ENCODE measurements at regions of chr19 and their contacts with region 1.

Region 1: DNA sequence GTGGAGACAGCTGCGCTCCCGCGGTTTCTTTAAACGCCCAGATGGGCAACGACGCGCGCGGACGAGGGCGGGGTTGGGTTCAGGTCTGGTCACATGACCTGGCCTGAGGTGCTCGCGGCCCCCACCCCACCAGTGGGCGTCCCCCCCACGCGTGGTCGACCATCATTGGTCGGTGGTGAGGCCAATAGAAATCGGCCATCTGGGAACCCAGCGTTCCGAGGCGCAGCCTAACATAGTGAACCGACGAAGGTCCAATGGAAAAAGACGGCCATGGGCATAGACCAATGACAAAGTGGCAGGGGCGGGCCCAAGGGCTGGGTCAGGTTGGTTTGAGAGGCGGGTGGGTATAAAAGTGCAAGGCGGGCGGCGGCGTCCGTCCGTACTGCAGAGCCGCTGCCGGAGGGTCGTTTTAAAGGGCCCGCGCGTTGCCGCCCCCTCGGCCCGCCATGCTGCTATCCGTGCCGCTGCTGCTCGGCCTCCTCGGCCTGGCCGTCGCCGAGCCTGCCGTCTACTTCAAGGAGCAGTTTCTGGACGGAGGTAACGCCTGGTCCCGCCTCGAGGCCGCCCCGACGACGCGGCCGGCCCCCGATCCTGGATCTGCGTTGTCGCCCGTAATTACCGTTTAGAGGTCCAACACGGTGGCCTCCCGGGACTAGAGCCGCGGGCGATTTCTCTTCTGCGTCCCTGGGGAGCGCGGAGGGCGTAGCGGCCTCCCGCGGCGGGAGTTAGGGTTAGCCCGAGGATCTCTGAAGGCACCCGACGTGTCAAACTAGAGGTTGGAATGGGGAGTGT is at the start of gene CALR:
- DNase-seq: peak; percentile 97
- ATAC-seq: peak; percentile 92
- H3K4me3 ChIP-seq: peak within 1 kb of the TSS; percentile 90
- H3K27ac ChIP-seq: peak within 1 kb of the TSS; percentile 89
- H3K4me1 ChIP-seq: peaks cover 49% of the 10 kb centered on the region
- H3K27me3 ChIP-seq: no peaks in the 10 kb centered on the region
- CTCF ChIP-seq: peak in 1 of 3 experiments; percentile 10; a peak in 1 of 6 replicates
- EP300 ChIP-seq: peak in 1 of 2 experiments; percentile 8; a peak in 1 of 4 replicates
- POLR2A ChIP-seq: peak; percentile 99
- RAD21 ChIP-seq: no peak
- polyA plus RNA-seq, gene CALR: 202 to 216 TPM

Region 2: DNA sequence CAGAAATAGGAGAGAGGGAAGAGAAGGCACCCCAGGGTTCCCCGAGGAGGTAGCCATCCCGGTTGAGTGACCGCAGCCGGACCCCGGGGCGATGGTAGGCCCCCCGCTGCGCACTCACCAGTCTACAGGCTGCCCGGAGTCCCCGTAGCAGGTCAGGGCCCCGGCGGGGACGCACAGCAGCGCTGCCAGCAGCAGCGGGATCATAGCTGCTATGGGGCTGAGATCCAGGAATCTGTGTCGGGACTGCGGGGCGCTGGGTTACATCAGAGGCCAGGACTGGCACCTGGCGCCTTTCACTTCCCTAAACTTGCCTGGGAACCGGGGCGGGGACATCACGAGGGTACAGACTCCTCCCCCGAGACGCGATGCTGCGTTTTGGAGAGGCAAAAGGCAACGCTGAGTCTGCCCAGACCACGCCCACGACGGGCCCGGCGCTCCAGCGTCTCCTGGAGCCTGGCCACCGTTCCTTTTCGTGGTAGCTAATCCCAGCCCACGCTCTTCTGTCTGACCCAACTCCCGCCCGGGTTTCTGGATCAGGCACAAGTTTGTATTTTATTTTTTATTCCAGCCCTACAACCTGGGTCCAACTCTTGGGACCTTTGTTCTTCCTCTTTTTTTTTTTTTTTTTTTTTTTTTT is 57.1 kb before region 1 on chr19 and contains the start of gene DNASE2:
- CTCF ChIA-PET with region 1: interaction called, 8 read pairs
- POLR2A ChIA-PET with region 1: interaction called, 13 read pairs
- RAD21 ChIA-PET with region 1: interaction called, 5 read pairs
- SMC1A ChIA-PET with region 1: interaction called, 5 read pairs
- in situ Hi-C with region 1: no loop called
- intact Hi-C with region 1: loop called (anchors 1 kb)
- DNase-seq: peak; percentile 85
- ATAC-seq: peak; percentile 88
- H3K4me3 ChIP-seq: peak within 1 kb of the TSS; percentile 90
- H3K27ac ChIP-seq: peak within 1 kb of the TSS; percentile 82
- H3K4me1 ChIP-seq: peaks cover 16% of the 10 kb centered on the region
- H3K27me3 ChIP-seq: no peaks in the 10 kb centered on the region; a peak in 1 of 4 replicates
- CTCF ChIP-seq: no peak
- EP300 ChIP-seq: peak in 1 of 2 experiments; percentile 59; a peak in 1 of 4 replicates
- POLR2A ChIP-seq: peak; percentile 88
- RAD21 ChIP-seq: no peak
- polyA plus RNA-seq, gene DNASE2: 4.9 to 7.8 TPM

Region 3: GRCh38 chr19:12899891-12900518 is 38.4 kb before region 1 on chr19:
- CTCF ChIA-PET with region 1: interaction called, 4 read pairs
- POLR2A ChIA-PET with region 1: interaction called, 11 read pairs
- RAD21 ChIA-PET with region 1: interaction called, 11 read pairs
- SMC1A ChIA-PET with region 1: interaction called, 10 read pairs
- in situ Hi-C with region 1: no loop called
- intact Hi-C with region 1: no loop called
- DNase-seq: peak; percentile 61
- ATAC-seq: peak; percentile 97
- H3K4me3 ChIP-seq: peak overlapping the region; percentile 9; the same call in 1 of the 2 replicates
- H3K27ac ChIP-seq: peak overlapping the region; percentile 4; the same call in 1 of the 2 replicates
- H3K4me1 ChIP-seq: peaks cover 15% of the 10 kb centered on the region
- H3K27me3 ChIP-seq: no peaks in the 10 kb centered on the region
- CTCF ChIP-seq: peak in 2 of 3 experiments; percentile 1 to 18; a peak in 1 of 6 replicates
- EP300 ChIP-seq: peak; percentile 76 to 89; a peak in 3 of 4 replicates
- POLR2A ChIP-seq: no peak
- RAD21 ChIP-seq: no peak

Region 4: GRCh38 chr19:12918271-12918670 is 20.2 kb before region 1 on chr19:
- CTCF ChIA-PET with region 1: no interaction called
- POLR2A ChIA-PET with region 1: interaction called, 8 read pairs
- RAD21 ChIA-PET with region 1: no interaction called
- SMC1A ChIA-PET with region 1: interaction called, 14 read pairs
- in situ Hi-C with region 1: no loop called
- intact Hi-C with region 1: no loop called
- DNase-seq: no peak
- ATAC-seq: no peak
- H3K4me3 ChIP-seq: no peak overlapping the region
- H3K27ac ChIP-seq: no peak overlapping the region
- H3K4me1 ChIP-seq: peaks cover 10% of the 10 kb centered on the region
- H3K27me3 ChIP-seq: no peaks in the 10 kb centered on the region
- CTCF ChIP-seq: no peak
- EP300 ChIP-seq: no peak
- POLR2A ChIP-seq: no peak; the same call in 1 of the 2 replicates
- RAD21 ChIP-seq: no peak

Region 5: DNA sequence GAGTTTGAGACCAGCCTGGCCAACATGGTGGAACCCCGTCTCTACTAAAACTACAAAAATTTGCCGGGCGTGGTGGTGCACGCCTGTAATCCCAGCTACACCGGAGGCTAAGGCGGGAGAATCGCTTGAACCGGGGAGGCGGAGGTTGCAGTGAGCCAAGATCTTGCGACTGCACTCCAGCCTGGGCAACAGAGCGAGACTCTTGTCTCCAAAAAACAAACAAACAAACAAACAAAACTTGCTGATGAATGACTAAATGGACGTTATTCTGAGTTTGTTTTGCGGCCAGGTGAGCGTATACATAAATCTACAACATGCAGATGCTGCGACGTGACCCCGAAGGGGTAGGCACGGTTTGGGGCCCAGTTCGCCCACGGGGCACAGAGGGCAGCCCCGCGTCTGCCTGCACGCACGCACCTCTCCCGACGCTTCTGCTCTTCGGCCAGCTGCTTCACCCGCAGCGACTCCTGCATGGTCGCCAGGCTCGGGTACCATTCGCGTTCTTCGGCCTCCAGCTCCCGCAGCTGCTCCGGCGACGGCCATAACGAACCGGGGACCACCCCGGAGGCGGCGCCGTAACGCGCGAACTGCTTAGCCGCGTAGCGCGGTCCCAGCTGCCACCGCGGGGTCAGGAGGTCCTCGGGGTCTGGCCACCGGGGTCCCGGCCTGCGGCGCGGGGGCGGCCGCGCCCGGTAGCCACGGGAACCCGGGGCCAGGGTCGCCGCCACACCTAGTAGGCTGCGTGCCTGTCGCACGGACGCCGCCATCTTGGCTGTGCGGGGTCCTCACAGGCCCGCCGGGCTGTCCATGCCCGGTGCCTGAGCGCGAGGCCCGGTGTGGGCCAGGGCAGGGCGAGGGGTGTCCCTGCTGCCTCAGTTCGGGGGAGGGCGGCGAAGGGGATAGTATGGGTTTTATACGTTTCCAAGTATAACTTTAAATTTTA is 18.3 kb after region 1 on chr19 and contains the start of gene GADD45GIP1:
- CTCF ChIA-PET with region 1: no interaction called
- POLR2A ChIA-PET with region 1: interaction called, 11 read pairs
- RAD21 ChIA-PET with region 1: no interaction called
- SMC1A ChIA-PET with region 1: interaction called, 9 read pairs
- in situ Hi-C with region 1: no loop called
- intact Hi-C with region 1: no loop called
- DNase-seq: peak; percentile 41
- ATAC-seq: peak; percentile 94
- H3K4me3 ChIP-seq: peak within 1 kb of the TSS; percentile 78
- H3K27ac ChIP-seq: peak within 1 kb of the TSS; percentile 71
- H3K4me1 ChIP-seq: peaks cover 11% of the 10 kb centered on the region
- H3K27me3 ChIP-seq: no peaks in the 10 kb centered on the region
- CTCF ChIP-seq: no peak
- EP300 ChIP-seq: no peak
- POLR2A ChIP-seq: peak; percentile 99
- RAD21 ChIP-seq: no peak
- polyA plus RNA-seq, gene GADD45GIP1: 5.1 to 13.4 TPM